Gastrocnemius medialis (tissue), 4 donors: ENCODE measurements at regions of chr2 and their contacts with region 1.

Region 1: GRCh38 chr2:61658841-61659780 is 121.0 kb upstream of the XPO1 start:
- DNase-seq: peak; percentile 69 to 74
- ATAC-seq: peak; percentile 94 to 97
- H3K4me3 ChIP-seq: no peak overlapping the region
- H3K27ac ChIP-seq: peak overlapping the region; percentile 80 to 92 (median 88)
- H3K4me1 ChIP-seq: peaks cover 22 to 24% of the 10 kb centered on the region in 2 donors
- H3K27me3 ChIP-seq: no peaks in the 10 kb centered on the region
- CTCF ChIP-seq: peak in 4 of 5 experiments; percentile 21 to 51 (median 38)
- POLR2A ChIP-seq: no peak

Region 2: GRCh38 chr2:61620244-61621159 is 38.6 kb before region 1 on chr2:
- in situ Hi-C with region 1: no loop called
- intact Hi-C with region 1: no loop called
- DNase-seq: no peak
- ATAC-seq: no peak
- H3K4me3 ChIP-seq: no peak overlapping the region
- H3K27ac ChIP-seq: no peak overlapping the region
- H3K4me1 ChIP-seq: no peaks in the 10 kb centered on the region
- H3K27me3 ChIP-seq: no peaks in the 10 kb centered on the region
- CTCF ChIP-seq: no peak
- POLR2A ChIP-seq: no peak

Region 3: GRCh38 chr2:61705625-61706024 is 46.5 kb after region 1 on chr2:
- in situ Hi-C with region 1: no loop called
- intact Hi-C with region 1: loop called (anchors 1 kb)
- DNase-seq: peak; percentile 85 to 93
- ATAC-seq: peak; percentile 82 to 84
- H3K4me3 ChIP-seq: no peak overlapping the region
- H3K27ac ChIP-seq: peak overlapping the region; percentile 86 to 98 (median 92)
- H3K4me1 ChIP-seq: peaks cover 28 to 51% of the 10 kb centered on the region in 2 donors
- H3K27me3 ChIP-seq: no peaks in the 10 kb centered on the region
- CTCF ChIP-seq: no peak
- POLR2A ChIP-seq: peak in 1 of 2 donors; percentile 60

Region 4: GRCh38 chr2:61789807-61790602 is 130.9 kb after region 1 on chr2:
- in situ Hi-C with region 1: no loop called
- intact Hi-C with region 1: loop called (anchors 1 kb)
- DNase-seq: no peak
- ATAC-seq: no peak
- H3K4me3 ChIP-seq: no peak overlapping the region
- H3K27ac ChIP-seq: no peak overlapping the region
- H3K4me1 ChIP-seq: no peaks in the 10 kb centered on the region
- H3K27me3 ChIP-seq: no peaks in the 10 kb centered on the region
- CTCF ChIP-seq: no peak
- POLR2A ChIP-seq: no peak